ENCODE measurements at regions of chr13 and their contacts with region 1.

Region 1: GRCh38 chr13:59677966-59678814 is 485.5 kb downstream of the DIAPH3 start:
- DNase-seq: no peak

Region 2: GRCh38 chr13:59391696-59392095 is 286.5 kb before region 1 on chr13:
- intact Hi-C with region 1: loop called (anchors 2 kb)
- DNase-seq: no peak

Region 3: GRCh38 chr13:59458908-59459579 is 219.1 kb before region 1 on chr13:
- intact Hi-C with region 1: loop called (anchors 5 kb)
- DNase-seq: no peak

Region 4: DNA sequence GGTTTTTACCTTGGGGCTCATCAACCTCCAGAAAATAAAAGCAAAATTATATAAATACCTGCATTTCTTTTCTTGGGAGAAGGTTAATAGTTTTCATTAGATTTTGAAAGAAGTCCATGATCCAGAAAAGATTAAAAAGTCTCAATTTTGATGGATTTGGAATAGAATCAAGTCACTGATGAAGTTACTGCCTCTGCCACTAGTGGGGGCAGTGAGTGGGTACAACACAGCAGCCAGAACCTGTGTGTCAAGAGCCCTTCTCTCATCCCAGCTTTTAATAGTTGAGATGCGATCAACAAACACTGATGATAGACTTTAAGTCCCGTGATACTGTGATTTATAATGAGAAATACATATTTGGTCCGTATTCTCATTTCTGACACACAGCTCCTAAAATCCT is 201.2 kb before region 1 on chr13:
- intact Hi-C with region 1: loop called (anchors 5 kb)
- DNase-seq: no peak

Region 5: DNA sequence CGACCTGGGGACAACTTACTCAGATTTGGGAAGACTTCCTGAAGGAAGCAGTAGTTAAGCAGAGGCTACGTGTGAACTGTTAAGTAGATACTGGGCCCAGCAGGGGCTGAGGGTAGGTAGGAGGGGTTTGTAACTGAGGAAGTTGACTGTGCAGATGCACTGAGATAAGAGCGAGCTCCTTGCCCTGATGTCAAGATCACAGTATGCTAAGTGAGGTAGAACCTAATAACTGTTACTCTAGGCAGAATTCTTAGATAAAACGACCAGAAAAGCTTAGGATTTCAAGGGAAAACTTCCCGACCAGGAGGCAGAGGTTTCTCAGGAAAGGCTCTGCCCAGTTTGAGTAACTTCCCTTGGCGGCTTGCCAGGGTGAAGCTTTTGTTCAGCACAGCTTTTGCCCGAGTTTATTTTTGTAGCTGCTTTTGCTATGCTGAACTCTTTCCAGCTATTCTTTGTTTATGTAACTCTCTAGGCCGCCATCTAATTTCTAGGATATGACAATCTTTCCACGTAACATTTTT is 146.6 kb before region 1 on chr13:
- intact Hi-C with region 1: loop called (anchors 5 kb)
- DNase-seq: peak; percentile 89

Measured in cardiac septum (tissue), 1 donor.